Mucosa of descending colon (tissue), 3 donors: ENCODE measurements at regions of chr13 and their contacts with region 1.

Region 1: GRCh38 chr13:100514788-100515409 is 73.7 kb downstream of the GGACT start:
- DNase-seq: peak; percentile 72 to 91 (median 85)
- ATAC-seq: peak; percentile 82
- H3K4me3 ChIP-seq: no peak overlapping the region
- H3K4me1 ChIP-seq: peaks cover 15% of the 10 kb centered on the region
- CTCF ChIP-seq: peak; percentile 82

Region 2: DNA sequence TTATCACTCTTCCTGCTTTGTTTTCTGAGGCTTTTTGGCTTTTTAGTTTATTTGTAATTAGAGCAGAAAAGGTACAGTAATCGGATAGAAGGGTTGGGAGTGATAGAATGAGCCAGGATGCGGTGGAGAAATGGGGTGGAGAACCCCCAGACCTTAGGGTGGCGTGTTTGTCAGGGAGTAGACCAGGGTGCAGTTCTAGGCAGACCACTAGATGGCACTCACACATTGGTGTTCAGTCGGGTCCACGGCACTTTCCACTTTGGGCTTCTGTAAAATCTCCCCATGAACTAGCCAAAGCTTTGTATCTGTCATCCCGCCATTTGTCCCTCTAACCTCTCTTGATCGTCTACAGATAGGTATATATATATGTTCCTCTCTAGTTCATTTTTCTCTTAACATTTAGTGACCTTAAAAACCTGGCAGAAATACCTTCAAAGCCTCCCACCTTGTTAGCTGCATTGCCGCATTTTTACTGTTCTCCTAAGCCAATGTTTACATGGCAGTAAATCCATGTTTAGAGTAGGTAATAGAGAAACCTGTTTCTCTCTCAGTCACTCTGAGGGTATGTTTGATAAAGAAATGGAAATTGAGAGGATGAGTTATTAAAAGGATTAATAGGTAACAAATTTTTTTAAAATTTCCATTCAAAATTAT is 858.7 kb before region 1 on chr13:
- intact Hi-C with region 1: loop called in 1 of 2 experiments (anchors 10 kb)
- DNase-seq: peak in 2 of 3 donors; percentile 72 to 94
- ATAC-seq: peak; percentile 92
- H3K4me3 ChIP-seq: no peak overlapping the region
- H3K4me1 ChIP-seq: peaks cover 14% of the 10 kb centered on the region
- CTCF ChIP-seq: peak; percentile 86

Region 3: GRCh38 chr13:100244431-100244830 is 270.5 kb before region 1 on chr13:
- intact Hi-C with region 1: no loop called
- DNase-seq: no peak
- ATAC-seq: no peak
- H3K4me3 ChIP-seq: no peak overlapping the region
- H3K4me1 ChIP-seq: no peaks in the 10 kb centered on the region
- CTCF ChIP-seq: no peak